ENCODE measurements at regions of chr16 and their contacts with region 1.

Region 1: GRCh38 chr16:11530171-11530940 is 56.4 kb downstream of the LITAF start:
- DNase-seq: no peak
- H3K4me3 ChIP-seq: no peak overlapping the region
- H3K27ac ChIP-seq: no peak overlapping the region
- H3K4me1 ChIP-seq: peaks cover 0 to 12% (median 3%) of the 10 kb centered on the region in 4 experiments
- H3K27me3 ChIP-seq: peaks cover 0 to 16% (median 0%) of the 10 kb centered on the region in 5 experiments

Region 2: DNA sequence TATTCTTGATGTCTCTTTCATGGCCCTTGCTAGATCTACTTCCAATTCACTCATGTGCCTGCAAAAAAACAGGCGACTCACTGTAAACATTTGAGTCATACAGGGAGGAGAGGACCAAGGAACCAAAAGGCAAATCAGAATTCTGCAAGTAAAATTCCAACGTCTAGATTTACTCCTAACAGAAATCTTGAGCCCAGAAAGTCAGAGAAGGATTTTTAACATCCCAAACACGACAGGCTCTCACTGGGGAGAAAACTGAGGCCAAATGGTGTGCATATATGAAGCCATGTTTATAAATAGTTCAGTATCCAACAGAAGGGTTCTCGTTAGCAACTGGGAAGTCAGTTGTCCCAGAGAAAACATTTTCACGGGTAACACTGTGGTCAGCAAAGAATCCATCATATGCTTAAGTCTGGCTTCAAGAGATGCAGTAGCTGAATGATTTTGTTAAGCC is 16.3 kb after region 1 on chr16:
- CTCF ChIA-PET with region 1: interaction called, 12 read pairs
- POLR2A ChIA-PET with region 1: no interaction called
- DNase-seq: no peak
- H3K4me3 ChIP-seq: no peak overlapping the region
- H3K27ac ChIP-seq: no peak overlapping the region
- H3K4me1 ChIP-seq: peaks cover 0 to 2% (median under 1%) of the 10 kb centered on the region in 4 experiments
- H3K27me3 ChIP-seq: no peaks in the 10 kb centered on the region

Measured in common myeloid progenitor, CD34-positive (primary cell).